ENCODE measurements at regions of chr18 and their contacts with region 1.

Region 1: GRCh38 chr18:21406111-21406510 is 164.1 kb downstream of the GREB1L start:
- DNase-seq: no peak
- H3K4me3 ChIP-seq: no peak overlapping the region
- H3K27ac ChIP-seq: no peak overlapping the region
- H3K4me1 ChIP-seq: no peaks in the 10 kb centered on the region
- H3K27me3 ChIP-seq: no peaks in the 10 kb centered on the region
- CTCF ChIP-seq: no peak

Region 2: GRCh38 chr18:21242141-21242779 is 163.9 kb before region 1 on chr18 and contains the start of gene GREB1L:
- intact Hi-C with region 1: no loop called
- DNase-seq: peak in 1 of 2 donors; percentile 73
- H3K4me3 ChIP-seq: peak within 1 kb of the TSS; percentile 77 to 90
- H3K27ac ChIP-seq: peak within 1 kb of the TSS; percentile 82 to 84
- H3K4me1 ChIP-seq: peaks cover 0 to 25% (median 18%) of the 10 kb centered on the region in 4 donors
- H3K27me3 ChIP-seq: peaks cover 0 to 5% of the 10 kb centered on the region in 2 donors
- CTCF ChIP-seq: peak; percentile 11 to 30

Region 3: GRCh38 chr18:21264651-21265050 is 141.5 kb before region 1 on chr18:
- intact Hi-C with region 1: loop called (anchors 10 kb)
- DNase-seq: no peak
- H3K4me3 ChIP-seq: no peak overlapping the region
- H3K27ac ChIP-seq: no peak overlapping the region
- H3K4me1 ChIP-seq: peaks cover 0 to 24% (median 0%) of the 10 kb centered on the region in 4 donors
- H3K27me3 ChIP-seq: no peaks in the 10 kb centered on the region
- CTCF ChIP-seq: no peak

Region 4: GRCh38 chr18:23307567-23308295 is 1901.6 kb after region 1 on chr18:
- intact Hi-C with region 1: no loop called
- DNase-seq: no peak
- H3K4me3 ChIP-seq: no peak overlapping the region
- H3K27ac ChIP-seq: no peak overlapping the region
- H3K4me1 ChIP-seq: peaks cover 0 to 30% (median 9%) of the 10 kb centered on the region in 4 donors
- H3K27me3 ChIP-seq: no peaks in the 10 kb centered on the region
- CTCF ChIP-seq: no peak

Measured in tibial artery (tissue), 4 donors.